GM10248 (cell line): ENCODE measurements at regions of chr10 and their contacts with region 1.

Region 1: GRCh38 chr10:29403208-29403607 is 114.3 kb downstream of the LYZL1 start:
- DNase-seq: no peak
- CTCF ChIP-seq: no peak

Region 2: DNA sequence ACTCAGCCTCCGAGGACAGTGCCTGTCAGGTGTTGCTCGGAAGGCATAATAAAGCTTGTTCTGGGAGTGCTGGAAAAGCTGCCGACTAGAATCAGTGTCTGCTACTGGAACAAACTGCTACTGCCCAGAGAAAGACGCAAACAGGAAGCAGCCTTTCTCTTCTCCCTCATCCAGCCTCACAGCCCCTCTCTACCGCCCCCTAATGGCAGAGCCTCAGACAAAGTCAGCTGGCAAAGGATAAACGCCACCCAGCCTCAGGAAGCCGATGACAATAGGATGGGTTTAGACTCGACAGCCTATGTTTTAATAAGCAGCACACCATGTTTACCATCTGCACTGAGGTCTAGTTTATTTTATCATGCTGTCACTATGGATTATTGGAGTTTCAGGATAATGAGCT is 283.8 kb before region 1 on chr10:
- CTCF ChIA-PET with region 1: no interaction called
- POLR2A ChIA-PET with region 1: no interaction called
- DNase-seq: no peak
- CTCF ChIP-seq: no peak

Region 3: DNA sequence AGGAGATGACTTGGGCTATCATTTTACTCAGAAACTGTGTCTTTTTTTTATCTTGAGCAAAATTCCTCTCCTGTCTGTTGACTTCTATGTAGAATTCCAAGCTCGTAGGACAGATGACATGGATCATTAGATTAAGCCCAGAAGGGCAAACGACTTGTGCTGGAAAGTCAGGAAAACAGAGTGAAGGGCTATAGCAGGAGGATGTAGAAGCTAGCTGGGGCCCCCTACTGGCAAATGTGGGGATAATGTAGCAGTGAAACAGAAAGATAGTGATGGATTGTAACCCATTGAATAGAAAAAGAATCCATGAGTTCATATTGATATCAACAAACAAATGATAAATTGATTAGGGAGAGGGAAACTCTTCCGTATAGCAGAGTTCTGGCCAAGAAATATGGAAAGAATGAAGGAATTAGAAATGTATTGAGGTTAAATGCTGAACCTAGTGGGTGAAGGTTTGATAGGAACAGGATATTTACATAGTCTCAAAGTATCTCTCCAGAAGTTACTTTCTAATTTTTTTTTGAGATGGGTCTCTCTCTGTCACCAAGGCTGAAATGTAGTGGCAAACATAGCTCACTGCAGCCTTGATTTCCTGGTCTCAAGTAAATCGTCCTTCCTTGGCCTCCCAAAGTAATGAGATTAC is 10.7 kb before region 1 on chr10:
- CTCF ChIA-PET with region 1: interaction called, 35 read pairs
- POLR2A ChIA-PET with region 1: no interaction called
- DNase-seq: peak; percentile 52
- CTCF ChIP-seq: peak; percentile 56

Region 4: GRCh38 chr10:29435809-29436501 is 32.7 kb after region 1 on chr10:
- CTCF ChIA-PET with region 1: no interaction called
- POLR2A ChIA-PET with region 1: no interaction called
- DNase-seq: no peak
- CTCF ChIP-seq: no peak

Region 5: GRCh38 chr10:29465384-29465783 is 62.2 kb after region 1 on chr10:
- CTCF ChIA-PET with region 1: no interaction called
- POLR2A ChIA-PET with region 1: no interaction called
- DNase-seq: no peak
- CTCF ChIP-seq: no peak